Activated T-helper 1 cell treated with anti-CD3 and anti-CD28 coated beads, Interleukin-12 subunit alpha, Interleukin-12 subunit beta, Interleukin-2, Interleukin-4 antibody, amounts not matched to agents 30 ng/mL and 10 ng/mL and 1 ng/mL, durations not matched to agents 14 hours and 24 hours and 36 hours (primary cell): ENCODE measurements at regions of chr6 and their contacts with region 1.

Region 1: DNA sequence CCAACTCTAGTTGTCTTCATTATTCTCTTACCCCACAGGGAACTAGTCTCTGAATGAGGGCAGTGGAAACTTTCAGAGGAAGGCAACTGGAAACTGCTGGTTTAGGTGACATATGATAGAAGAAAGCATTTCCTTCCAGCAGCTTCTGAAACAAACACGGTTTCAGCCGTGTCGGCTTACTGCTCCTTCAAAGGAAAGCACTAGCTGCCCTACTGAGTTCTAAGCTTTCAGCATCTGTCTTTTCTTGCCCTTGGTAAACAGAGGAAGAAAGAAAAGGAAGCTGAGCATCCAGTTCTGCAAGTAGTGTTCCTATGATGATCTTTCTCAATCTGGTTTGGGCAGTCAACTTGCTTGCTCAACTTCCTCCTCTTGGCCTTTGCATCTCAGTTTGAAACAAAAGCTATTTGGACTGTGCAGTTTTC is 117.5 kb upstream of the CEP85L start:
- DNase-seq: peak; percentile 31
- H3K4me3 Mint-ChIP-seq: peak overlapping the region; percentile 1
- H3K27ac Mint-ChIP-seq: peak overlapping the region; percentile 80
- H3K4me1 Mint-ChIP-seq: peaks cover 29% of the 10 kb centered on the region
- H3K27me3 Mint-ChIP-seq: no peaks in the 10 kb centered on the region

Region 2: DNA sequence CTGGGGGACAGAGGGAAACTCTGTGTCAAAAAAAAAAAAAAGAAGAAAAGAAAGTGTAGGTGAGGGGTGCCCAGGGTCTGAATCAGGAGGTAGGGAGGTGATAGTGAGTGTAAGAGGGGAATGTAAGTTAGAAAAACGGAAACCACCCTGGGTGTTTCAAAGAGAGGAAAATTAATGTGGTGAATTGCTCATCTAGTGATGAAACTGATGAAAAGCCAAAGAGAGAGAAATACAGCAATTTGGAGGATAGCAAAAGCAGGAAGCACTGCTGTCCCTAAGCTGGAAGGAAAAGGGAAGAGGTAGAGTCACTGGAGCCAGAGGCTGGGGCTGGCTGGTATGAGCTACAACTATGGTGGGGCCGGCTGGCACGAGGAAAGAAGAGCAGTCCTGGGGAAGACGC is 32.5 kb before region 1 on chr6:
- intact Hi-C with region 1: loop called (anchors 2 kb)
- DNase-seq: no peak
- H3K4me3 Mint-ChIP-seq: no peak overlapping the region
- H3K27ac Mint-ChIP-seq: peak overlapping the region; percentile 65
- H3K4me1 Mint-ChIP-seq: peaks cover 35% of the 10 kb centered on the region
- H3K27me3 Mint-ChIP-seq: no peaks in the 10 kb centered on the region